Thyroid gland (tissue), 4 donors: ENCODE measurements at regions of chr19 and their contacts with region 1.

Region 1: DNA sequence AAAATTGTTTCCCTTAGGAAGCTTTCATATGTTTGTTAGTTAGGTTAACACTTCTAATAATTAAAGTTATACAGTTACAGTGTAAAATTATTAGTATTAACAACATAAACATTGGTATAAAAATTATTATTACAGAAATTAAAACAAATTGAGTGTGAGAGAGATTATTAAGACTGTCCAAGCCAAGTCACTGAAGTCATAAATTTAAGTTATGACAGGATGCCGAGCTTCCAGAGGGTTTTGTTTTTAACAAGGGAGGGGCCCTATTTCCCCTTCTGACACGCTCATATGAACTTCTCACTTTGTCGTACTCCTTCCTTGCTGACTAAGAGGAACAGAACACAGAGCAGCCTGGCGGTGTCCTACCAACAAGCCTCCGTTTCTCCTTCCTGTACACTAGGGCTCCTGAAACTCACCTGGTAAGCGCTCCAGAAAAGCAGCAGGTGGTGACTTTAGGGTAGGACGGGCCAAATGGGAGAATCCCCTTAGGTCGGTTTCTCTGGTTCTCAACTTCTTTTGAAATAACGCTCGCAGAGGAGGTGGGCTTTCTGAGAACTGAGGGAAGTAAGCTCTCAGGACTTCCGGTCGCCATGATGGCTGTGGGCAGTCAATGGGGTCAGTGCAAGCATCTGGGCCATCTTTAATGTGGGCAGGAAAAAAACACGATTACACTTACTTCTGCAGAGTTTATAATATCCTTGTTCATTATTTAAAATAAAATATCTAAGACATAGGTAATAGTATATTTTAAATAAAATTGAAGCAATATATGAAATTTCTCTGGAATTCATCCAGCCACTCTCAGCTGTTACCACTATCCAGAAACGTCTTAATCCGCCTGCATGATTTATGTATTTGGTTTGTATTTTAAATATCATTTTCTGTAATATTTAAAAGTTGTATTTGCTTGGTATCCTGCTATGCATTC is at the start of gene CARD8:
- DNase-seq: peak; percentile 79 to 83
- H3K4me3 ChIP-seq: peak within 1 kb of the TSS in 2 of 3 donors; percentile 59 to 60
- H3K27ac ChIP-seq: peak within 1 kb of the TSS; percentile 82 to 96 (median 87)
- H3K4me1 ChIP-seq: peaks cover 11 to 18% of the 10 kb centered on the region in 2 donors
- H3K27me3 ChIP-seq: no peaks in the 10 kb centered on the region
- CTCF ChIP-seq: peak in 2 of 6 experiments; percentile 10 to 33
- POLR2A ChIP-seq: peak in 1 of 2 donors; percentile 76
- total RNA-seq, gene CARD8: 37.0 to 58.9 (median 57.7) TPM

Region 2: DNA sequence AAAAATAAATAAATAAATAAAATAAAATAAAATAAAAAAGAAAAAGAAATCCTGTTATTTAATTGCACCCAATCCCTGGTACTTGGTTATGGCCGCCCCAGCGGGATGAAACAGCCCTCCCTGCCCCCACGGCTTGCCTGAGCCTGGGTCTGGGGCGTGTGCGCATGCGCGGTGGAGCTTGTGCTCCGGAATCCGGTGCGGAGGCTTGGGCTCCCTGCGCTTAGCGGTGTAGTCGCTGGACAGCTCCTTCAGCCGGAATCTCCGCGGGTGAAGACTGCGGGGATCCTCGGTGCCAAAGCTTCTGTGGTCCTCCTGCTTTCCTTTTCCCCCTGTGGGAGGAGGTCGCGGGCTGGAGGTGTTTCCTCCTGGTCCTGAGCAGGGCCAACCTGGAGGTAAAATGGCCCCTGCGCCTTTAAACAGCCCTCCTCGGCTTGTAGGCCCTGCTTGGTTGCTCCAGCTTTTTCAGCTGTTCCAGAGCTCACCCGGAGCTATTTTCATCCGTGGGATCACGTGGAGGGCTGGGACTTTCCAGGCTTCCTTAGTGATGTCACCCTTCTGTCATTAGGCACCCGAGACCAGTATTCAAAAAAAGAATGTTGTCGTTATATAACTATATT is 145.2 kb before region 1 on chr19 and contains the start of gene PLA2G4C:
- intact Hi-C with region 1: loop called (anchors 10 kb)
- DNase-seq: peak; percentile 90 to 95
- H3K4me3 ChIP-seq: peak within 1 kb of the TSS in 2 of 3 donors; percentile 21 to 23
- H3K27ac ChIP-seq: peak within 1 kb of the TSS; percentile 95 to 99 (median 97)
- H3K4me1 ChIP-seq: peaks cover 8 to 31% of the 10 kb centered on the region in 2 donors
- H3K27me3 ChIP-seq: no peaks in the 10 kb centered on the region
- CTCF ChIP-seq: peak in 1 of 6 experiments; percentile 3
- POLR2A ChIP-seq: peak; percentile 24 to 57
- total RNA-seq, gene PLA2G4C: 4.8 to 17.7 (median 10.5) TPM

Region 3: GRCh38 chr19:48170038-48170812 is 85.4 kb before region 1 on chr19 and contains the starts of genes LIG1 and ZSWIM9:
- intact Hi-C with region 1: no loop called
- DNase-seq: peak; percentile 95 to 96
- H3K4me3 ChIP-seq: peak within 1 kb of the TSS; percentile 74 to 81 (median 77)
- H3K27ac ChIP-seq: peak within 1 kb of the TSS; percentile 89 to 91 (median 90)
- H3K4me1 ChIP-seq: peaks cover 6 to 11% of the 10 kb centered on the region in 2 donors
- H3K27me3 ChIP-seq: no peaks in the 10 kb centered on the region
- CTCF ChIP-seq: no peak
- POLR2A ChIP-seq: peak in 1 of 2 donors; percentile 29
- total RNA-seq, gene LIG1: 17.7 to 33.3 (median 26.7) TPM
- total RNA-seq, gene ZSWIM9: 4.2 to 6.1 (median 5.4) TPM

Region 4: GRCh38 chr19:48203732-48204628 is 51.7 kb before region 1 on chr19:
- intact Hi-C with region 1: loop called (anchors 10 kb)
- DNase-seq: peak; percentile 95 to 96
- H3K4me3 ChIP-seq: peak overlapping the region; percentile 1 to 52 (median 38)
- H3K27ac ChIP-seq: peak overlapping the region; percentile 17 to 78 (median 70)
- H3K4me1 ChIP-seq: peaks cover 5 to 21% of the 10 kb centered on the region in 2 donors
- H3K27me3 ChIP-seq: no peaks in the 10 kb centered on the region
- CTCF ChIP-seq: peak in 1 of 6 experiments; percentile 28
- POLR2A ChIP-seq: peak; percentile 31 to 90

Region 5: GRCh38 chr19:48303367-48303766 is 47.7 kb after region 1 on chr19:
- intact Hi-C with region 1: no loop called
- DNase-seq: no peak
- H3K4me3 ChIP-seq: no peak overlapping the region
- H3K27ac ChIP-seq: no peak overlapping the region
- H3K4me1 ChIP-seq: no peaks in the 10 kb centered on the region
- H3K27me3 ChIP-seq: no peaks in the 10 kb centered on the region
- CTCF ChIP-seq: no peak
- POLR2A ChIP-seq: no peak